ENCODE measurements at regions of chr3 and their contacts with region 1.

Region 1: GRCh38 chr3:116663161-116664110 is 46.1 kb upstream of the TUSC7 start:
- DNase-seq: no peak

Region 2: DNA sequence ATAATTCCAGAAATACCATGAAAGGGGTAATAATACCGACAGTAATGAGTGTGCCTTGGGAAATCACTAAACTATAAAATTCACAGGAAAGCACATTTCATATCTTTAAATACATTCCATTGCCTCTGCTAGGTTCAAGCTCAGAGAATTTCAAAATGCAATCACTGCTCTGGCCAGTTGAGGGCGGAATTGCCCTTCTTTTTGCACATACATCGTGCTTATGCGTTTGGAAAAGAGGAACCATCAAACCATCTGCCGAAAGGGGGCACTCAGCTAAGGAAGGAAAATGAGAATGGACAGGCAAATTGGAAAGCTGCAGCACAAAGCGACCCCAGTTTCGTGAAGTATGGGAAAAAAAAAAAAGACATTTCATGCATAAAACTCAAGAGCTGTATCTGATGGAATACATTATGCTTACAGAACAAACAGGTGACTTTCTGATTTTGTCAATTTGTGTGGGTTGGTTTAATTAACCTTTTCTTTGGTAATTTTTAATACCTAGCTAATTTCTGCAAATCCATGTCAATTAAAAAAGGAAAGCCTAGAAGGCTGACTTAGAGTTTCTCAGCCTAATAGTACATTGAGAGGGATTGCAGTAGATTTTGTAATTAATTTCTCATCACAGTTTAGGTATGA is 107.5 kb after region 1 on chr3:
- in situ Hi-C with region 1: loop called (anchors 25 kb)
- DNase-seq: peak; percentile 83